ENCODE measurements at regions of chr15 and their contacts with region 1.

Region 1: DNA sequence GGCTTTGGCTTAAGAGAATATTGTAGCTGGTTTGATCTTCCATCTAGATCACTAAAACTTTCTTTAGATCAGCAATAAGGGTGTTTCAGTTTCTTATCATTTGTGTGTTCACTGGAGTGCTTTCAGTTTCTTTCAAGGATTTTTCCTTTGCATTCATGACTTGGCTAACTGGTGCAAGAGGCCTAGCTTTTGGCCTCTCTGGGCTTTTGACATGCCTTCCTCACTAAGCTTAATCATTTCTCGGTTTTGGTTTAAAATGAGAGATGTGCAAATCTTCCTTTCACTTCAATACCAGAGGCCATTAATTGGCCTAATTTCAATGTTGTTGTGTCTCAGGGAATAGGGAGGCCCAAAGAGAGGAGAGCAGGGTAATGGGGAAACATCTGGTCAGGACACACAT is 30.3 kb upstream of the CCNB2 start:
- DNase-seq: no peak
- ATAC-seq: no peak
- H3K4me3 ChIP-seq: no peak overlapping the region
- H3K4me3 Mint-ChIP-seq: no peak overlapping the region
- H3K27ac ChIP-seq: no peak overlapping the region
- H3K27ac Mint-ChIP-seq: peak overlapping the region; percentile 28 to 66
- H3K4me1 ChIP-seq: no peaks in the 10 kb centered on the region
- H3K4me1 Mint-ChIP-seq: peaks cover 0 to 3% (median 2%) of the 10 kb centered on the region in 3 donors
- H3K27me3 ChIP-seq: no peaks in the 10 kb centered on the region
- H3K27me3 Mint-ChIP-seq: no peaks in the 10 kb centered on the region

Region 2: DNA sequence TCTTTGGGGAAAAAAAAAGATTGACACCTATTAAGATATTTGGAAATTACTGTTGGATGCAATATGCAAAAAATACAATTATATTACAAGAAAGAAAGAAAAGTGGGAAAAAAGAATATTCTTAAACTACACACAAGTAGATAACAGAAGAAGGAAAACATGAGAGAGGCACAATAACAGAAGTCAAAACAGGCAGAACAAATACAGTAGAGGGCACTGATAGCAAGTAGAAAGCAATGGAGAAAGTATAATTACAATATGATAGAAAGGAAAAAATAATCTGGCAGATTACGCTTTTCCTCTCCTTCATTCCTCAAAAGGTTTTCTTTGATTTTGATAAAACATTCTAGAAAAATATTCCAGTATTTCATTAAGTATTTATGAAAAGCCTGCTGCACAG is 397.2 kb before region 1 on chr15:
- CTCF ChIA-PET with region 1: no interaction called
- POLR2A ChIA-PET with region 1: interaction called in 1 of 2 experiments, 10 read pairs
- DNase-seq: no peak
- ATAC-seq: no peak
- H3K4me3 ChIP-seq: no peak overlapping the region
- H3K4me3 Mint-ChIP-seq: no peak overlapping the region
- H3K27ac ChIP-seq: no peak overlapping the region
- H3K27ac Mint-ChIP-seq: no peak overlapping the region
- H3K4me1 ChIP-seq: no peaks in the 10 kb centered on the region
- H3K4me1 Mint-ChIP-seq: peaks cover 18 to 22% (median 18%) of the 10 kb centered on the region in 3 donors
- H3K27me3 ChIP-seq: no peaks in the 10 kb centered on the region
- H3K27me3 Mint-ChIP-seq: no peaks in the 10 kb centered on the region

Region 3: DNA sequence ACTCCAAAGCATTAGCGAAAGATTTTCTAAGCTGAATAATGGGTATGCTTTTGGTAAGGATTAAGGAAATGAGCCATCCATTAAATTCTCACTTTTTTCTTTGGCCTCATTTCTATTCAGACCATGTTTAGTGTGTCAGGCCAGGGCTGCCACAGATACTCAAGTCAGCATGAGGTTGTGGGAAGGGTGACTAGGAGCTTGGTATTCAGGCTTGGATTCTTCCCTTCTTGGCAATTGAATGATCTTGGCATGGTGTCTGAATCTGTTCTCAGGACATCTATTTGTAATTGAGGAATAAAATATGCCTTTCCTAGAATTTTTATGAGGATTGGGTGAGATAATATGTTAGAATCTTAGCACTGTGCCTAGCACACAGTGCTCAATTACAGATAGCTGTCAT is 41.5 kb after region 1 on chr15:
- CTCF ChIA-PET with region 1: no interaction called
- POLR2A ChIA-PET with region 1: no interaction called
- DNase-seq: no peak
- ATAC-seq: no peak
- H3K4me3 ChIP-seq: no peak overlapping the region
- H3K4me3 Mint-ChIP-seq: no peak overlapping the region
- H3K27ac ChIP-seq: no peak overlapping the region
- H3K27ac Mint-ChIP-seq: no peak overlapping the region
- H3K4me1 ChIP-seq: no peaks in the 10 kb centered on the region
- H3K4me1 Mint-ChIP-seq: peaks cover 0 to 2% (median 0%) of the 10 kb centered on the region in 3 donors
- H3K27me3 ChIP-seq: no peaks in the 10 kb centered on the region
- H3K27me3 Mint-ChIP-seq: no peaks in the 10 kb centered on the region

Measured in T-cell (primary cell).